Heart left ventricle (tissue), 16 donors: ENCODE measurements at regions of chr5 and their contacts with region 1.

Region 1: DNA sequence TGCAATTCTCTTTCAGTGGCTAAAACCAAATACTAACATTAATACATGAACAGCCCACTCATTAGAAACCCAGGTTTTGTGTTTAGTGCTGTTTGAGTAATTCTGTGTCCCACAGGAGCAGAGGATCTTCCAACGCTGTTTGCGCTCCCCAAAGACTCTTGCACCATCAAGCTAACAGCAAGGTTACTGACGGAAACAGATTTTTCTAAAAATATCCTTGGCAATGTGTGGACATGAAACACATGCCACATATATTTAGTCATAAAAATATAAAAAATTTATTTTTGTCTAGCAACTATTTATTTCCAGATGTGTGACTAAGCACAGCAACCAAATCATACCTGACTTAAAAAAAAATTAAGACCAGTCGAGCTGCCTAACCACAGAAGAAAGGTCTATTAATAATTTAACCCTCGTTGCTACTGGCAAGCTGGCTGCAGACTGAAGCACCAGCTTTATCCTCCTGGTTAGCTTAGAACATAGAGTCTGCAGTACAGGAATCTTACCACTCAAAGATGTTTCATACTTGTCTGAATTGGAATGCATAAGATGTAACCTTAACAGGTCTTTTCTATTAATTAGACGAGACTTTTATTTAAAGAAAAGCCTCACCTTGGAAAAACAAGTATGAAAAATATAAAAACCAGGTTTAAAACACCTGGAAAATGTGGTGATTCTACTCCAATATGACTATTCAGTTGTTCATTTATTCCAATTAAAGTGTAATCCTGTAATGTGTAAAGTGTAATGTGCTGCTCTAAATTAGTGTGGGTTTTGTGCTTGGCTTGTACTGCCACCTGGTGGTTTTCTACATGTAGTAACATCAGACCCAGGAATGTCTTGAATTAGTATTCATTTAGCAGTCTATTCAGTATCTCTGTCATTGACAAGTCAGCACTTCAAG is 272.5 kb downstream of the EPB41L4A start:
- DNase-seq: peak in 4 of 5 donors; percentile 44 to 68 (median 56)
- ATAC-seq: peak; percentile 77 to 90 (median 88)
- H3K4me3 ChIP-seq: peak overlapping the region in 1 of 12 donors; percentile 4
- H3K27ac ChIP-seq: peak overlapping the region in 5 of 12 donors; percentile 11 to 51 (median 35)
- H3K4me1 ChIP-seq: peaks cover 0 to 36% (median 17%) of the 10 kb centered on the region in 12 donors
- H3K27me3 ChIP-seq: no peaks in the 10 kb centered on the region
- CTCF ChIP-seq: peak; percentile 78 to 94 (median 86)
- POLR2A ChIP-seq: no peak

Region 2: GRCh38 chr5:111158105-111158744 is 988.4 kb before region 1 on chr5:
- intact Hi-C with region 1: loop called (anchors 1 to 10 kb)
- DNase-seq: peak in 4 of 5 donors; percentile 39 to 58 (median 46)
- ATAC-seq: peak in 3 of 4 donors; percentile 54 to 64 (median 63)
- H3K4me3 ChIP-seq: no peak overlapping the region
- H3K27ac ChIP-seq: no peak overlapping the region
- H3K4me1 ChIP-seq: peaks cover 0 to 3% (median 0%) of the 10 kb centered on the region in 12 donors
- H3K27me3 ChIP-seq: no peaks in the 10 kb centered on the region
- CTCF ChIP-seq: peak; percentile 98 to 100 (median 100)
- POLR2A ChIP-seq: no peak

Region 3: DNA sequence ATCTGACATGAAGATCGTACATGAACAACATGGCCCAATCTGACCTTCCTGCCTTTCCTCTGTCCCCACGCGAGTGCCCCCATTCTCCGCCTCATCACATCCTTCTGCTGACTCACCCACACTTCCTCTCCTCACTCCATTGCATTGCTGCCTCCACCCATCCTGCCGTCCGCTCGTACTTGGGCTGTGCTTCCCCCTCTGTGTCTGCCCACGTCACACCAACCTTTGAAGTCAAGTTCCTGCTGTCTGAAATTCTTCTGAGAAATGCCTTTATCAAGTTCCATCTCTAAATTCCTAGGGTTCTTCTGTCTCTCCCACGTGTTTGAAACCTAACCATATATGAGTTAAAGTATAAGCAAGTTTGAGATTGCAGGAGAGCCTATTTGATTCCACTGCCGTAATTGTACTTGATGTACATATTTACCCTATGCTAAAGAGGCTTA is 616.3 kb before region 1 on chr5:
- intact Hi-C with region 1: loop called (anchors 1 to 5 kb)
- DNase-seq: peak; percentile 80 to 88 (median 81)
- ATAC-seq: peak; percentile 91 to 100 (median 98)
- H3K4me3 ChIP-seq: no peak overlapping the region
- H3K27ac ChIP-seq: peak overlapping the region in 11 of 12 donors; percentile 22 to 82 (median 57)
- H3K4me1 ChIP-seq: peaks cover 0 to 51% (median 0%) of the 10 kb centered on the region in 12 donors
- H3K27me3 ChIP-seq: no peaks in the 10 kb centered on the region
- CTCF ChIP-seq: no peak
- POLR2A ChIP-seq: no peak

Region 4: GRCh38 chr5:111680737-111681413 is 465.7 kb before region 1 on chr5:
- intact Hi-C with region 1: loop called in 4 of 10 experiments (anchors 5 to 10 kb)
- DNase-seq: peak in 4 of 5 donors; percentile 64 to 85 (median 73)
- ATAC-seq: peak; percentile 74 to 88 (median 88)
- H3K4me3 ChIP-seq: peak overlapping the region in 6 of 12 donors; percentile 10 to 29 (median 17)
- H3K27ac ChIP-seq: peak overlapping the region; percentile 30 to 72 (median 66)
- H3K4me1 ChIP-seq: peaks cover 0 to 37% (median 22%) of the 10 kb centered on the region in 12 donors
- H3K27me3 ChIP-seq: no peaks in the 10 kb centered on the region
- CTCF ChIP-seq: no peak
- POLR2A ChIP-seq: no peak

Region 5: GRCh38 chr5:111830333-111830732 is 316.2 kb before region 1 on chr5:
- intact Hi-C with region 1: loop called in 1 of 10 experiments (anchors 10 kb)
- DNase-seq: no peak
- ATAC-seq: no peak
- H3K4me3 ChIP-seq: no peak overlapping the region
- H3K27ac ChIP-seq: no peak overlapping the region
- H3K4me1 ChIP-seq: peaks cover 0 to 6% (median 0%) of the 10 kb centered on the region in 12 donors
- H3K27me3 ChIP-seq: no peaks in the 10 kb centered on the region
- CTCF ChIP-seq: no peak
- POLR2A ChIP-seq: no peak

Region 6: GRCh38 chr5:112012104-112012503 is 134.5 kb before region 1 on chr5:
- intact Hi-C with region 1: loop called in 3 of 10 experiments (anchors 5 to 10 kb)
- DNase-seq: peak in 2 of 5 donors; percentile 22 to 32
- ATAC-seq: peak in 3 of 4 donors; percentile 32 to 92 (median 53)
- H3K4me3 ChIP-seq: no peak overlapping the region
- H3K27ac ChIP-seq: peak overlapping the region in 6 of 12 donors; percentile 15 to 54 (median 40)
- H3K4me1 ChIP-seq: peaks cover 0 to 19% (median 12%) of the 10 kb centered on the region in 12 donors
- H3K27me3 ChIP-seq: no peaks in the 10 kb centered on the region
- CTCF ChIP-seq: no peak
- POLR2A ChIP-seq: no peak